Activated T-helper 1 cell treated with anti-CD3 and anti-CD28 coated beads, Interleukin-12 subunit alpha, Interleukin-12 subunit beta, Interleukin-2, Interleukin-4 antibody, amounts not matched to agents 30 ng/mL and 10 ng/mL and 1 ng/mL, durations not matched to agents 14 hours and 24 hours and 36 hours (primary cell): ENCODE measurements at regions of chr19 and their contacts with region 1.

Region 1: GRCh38 chr19:55586976-55587668 is 6.5 kb upstream of the ZNF579 start:
- DNase-seq: peak; percentile 88
- H3K4me3 Mint-ChIP-seq: peak overlapping the region; percentile 79
- H3K27ac Mint-ChIP-seq: no peak overlapping the region
- H3K4me1 Mint-ChIP-seq: peaks cover 19% of the 10 kb centered on the region
- H3K27me3 Mint-ChIP-seq: peaks cover 22% of the 10 kb centered on the region

Region 2: DNA sequence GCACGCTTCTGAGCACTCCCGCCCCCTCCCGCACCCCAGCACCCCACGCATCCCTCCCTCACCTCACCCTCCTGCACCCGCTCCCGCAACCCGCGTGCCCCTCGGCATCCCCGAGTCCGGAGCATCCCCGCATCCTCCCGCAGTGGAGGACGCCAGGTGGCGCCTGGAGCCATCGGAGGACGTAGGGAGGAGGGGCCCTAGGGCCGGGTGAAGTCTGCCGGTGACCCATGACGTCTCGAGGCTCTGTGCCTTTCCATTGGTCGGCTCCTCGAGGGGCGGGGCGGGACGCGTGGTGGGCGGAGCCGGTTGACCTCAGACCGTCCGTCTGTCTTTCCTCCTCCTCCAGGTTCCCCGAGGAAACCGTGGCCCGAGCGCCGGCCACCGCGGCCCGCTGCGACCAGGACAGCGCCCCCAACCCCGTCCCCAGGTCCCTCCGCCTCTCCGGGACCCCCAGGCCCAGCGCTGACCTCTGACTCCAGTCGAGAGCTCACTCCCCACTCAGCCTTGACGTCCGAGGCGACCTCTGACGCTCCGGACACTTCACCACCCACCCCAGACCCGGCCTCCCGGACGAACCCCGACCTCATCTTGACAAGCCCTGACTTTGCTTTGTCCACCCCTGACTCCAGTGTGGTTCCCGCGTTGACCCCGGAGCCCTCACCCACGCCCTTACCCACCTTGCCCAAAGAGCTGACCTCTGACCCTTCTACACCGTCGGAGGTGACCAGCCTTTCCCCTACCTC is 70.1 kb before region 1 on chr19:
- intact Hi-C with region 1: loop called (anchors 1 kb)
- DNase-seq: peak; percentile 88
- H3K4me3 Mint-ChIP-seq: peak overlapping the region; percentile 66
- H3K27ac Mint-ChIP-seq: peak overlapping the region; percentile 68
- H3K4me1 Mint-ChIP-seq: no peaks in the 10 kb centered on the region
- H3K27me3 Mint-ChIP-seq: peaks cover 2% of the 10 kb centered on the region

Region 3: DNA sequence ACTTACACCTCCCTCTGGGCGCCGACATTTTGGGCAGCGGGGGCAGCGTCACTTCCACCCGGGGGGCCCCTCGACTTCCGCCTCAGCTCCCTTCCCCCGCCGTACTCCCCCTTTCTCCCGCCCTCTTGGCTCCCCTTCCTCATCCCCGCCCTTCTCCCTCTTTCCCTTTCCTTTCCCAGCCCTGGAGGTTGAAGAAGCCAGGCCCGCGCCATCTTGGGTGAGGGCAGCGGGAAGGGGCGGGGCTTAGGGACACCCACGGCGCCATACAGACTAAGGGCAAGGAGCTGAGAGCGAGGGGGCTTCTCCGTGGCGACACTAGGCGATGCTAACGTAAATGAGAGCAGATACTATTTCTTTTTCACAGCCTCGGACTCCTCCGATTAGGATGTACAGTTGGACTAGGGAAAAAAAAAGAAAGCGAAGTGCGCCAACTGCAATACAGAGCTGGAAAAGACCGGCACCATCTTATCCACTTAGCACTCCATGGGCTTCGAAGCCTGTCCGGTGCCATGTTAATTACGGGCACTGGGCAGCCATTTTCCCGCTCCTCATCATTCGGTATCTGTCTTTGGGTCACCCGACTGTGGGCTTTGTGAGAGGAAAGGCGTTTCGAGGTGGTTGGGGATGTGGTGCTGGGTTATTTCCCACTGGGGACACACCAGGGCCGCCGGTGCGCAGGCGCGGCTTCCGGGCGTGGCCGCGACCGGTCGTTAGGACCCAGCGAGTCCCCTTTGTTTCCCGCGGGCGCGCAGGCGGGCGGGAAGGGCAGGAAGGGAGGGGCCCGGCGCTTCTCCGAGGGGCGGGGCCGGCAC is 12.6 kb after region 1 on chr19 and contains the start of gene FIZ1:
- intact Hi-C with region 1: loop called (anchors 1 kb)
- DNase-seq: peak; percentile 95
- H3K4me3 Mint-ChIP-seq: peak within 1 kb of the TSS; percentile 93
- H3K27ac Mint-ChIP-seq: peak within 1 kb of the TSS; percentile 98
- H3K4me1 Mint-ChIP-seq: peaks cover 28% of the 10 kb centered on the region
- H3K27me3 Mint-ChIP-seq: no peaks in the 10 kb centered on the region
- total RNA-seq, gene FIZ1: 24.2 and 24.7 TPM in 2 replicates

Region 4: DNA sequence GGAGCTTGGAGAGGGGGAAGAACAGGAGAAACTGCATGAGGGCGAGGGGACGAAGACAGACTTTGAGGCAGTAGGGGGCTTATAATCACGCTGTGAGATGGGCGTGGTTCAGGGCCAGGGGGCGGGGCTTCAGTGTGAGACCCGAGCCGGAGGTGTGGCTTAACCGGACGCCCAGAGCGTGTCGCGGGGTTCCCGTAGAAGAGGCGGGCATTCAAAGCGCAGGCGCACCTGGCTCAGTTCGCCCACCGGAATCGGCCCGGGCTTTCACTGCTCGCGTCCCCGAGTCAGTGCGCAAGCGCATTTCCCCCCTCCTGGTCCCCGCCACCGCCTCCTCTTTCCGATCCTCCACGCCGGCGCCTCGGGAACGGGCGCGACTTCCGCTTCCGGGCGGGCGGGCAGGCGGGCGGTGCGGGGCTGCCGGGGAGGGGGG is 18.1 kb after region 1 on chr19:
- intact Hi-C with region 1: loop called (anchors 1 kb)
- DNase-seq: peak; percentile 98
- H3K4me3 Mint-ChIP-seq: peak overlapping the region; percentile 86
- H3K27ac Mint-ChIP-seq: peak overlapping the region; percentile 95
- H3K4me1 Mint-ChIP-seq: peaks cover 45% of the 10 kb centered on the region
- H3K27me3 Mint-ChIP-seq: no peaks in the 10 kb centered on the region